ENCODE measurements at regions of chr2 and their contacts with region 1.

Region 1: GRCh38 chr2:113233593-113234550 is 44.8 kb downstream of the PAX8 start:
- DNase-seq: no peak
- ATAC-seq: no peak
- H3K4me3 Mint-ChIP-seq: peak overlapping the region in 5 of 10 donors; percentile 4 to 26 (median 18)
- H3K27ac Mint-ChIP-seq: peak overlapping the region in 3 of 10 donors; percentile 36 to 95 (median 47)
- H3K4me1 Mint-ChIP-seq: peaks cover 8 to 26% (median 16%) of the 10 kb centered on the region in 4 donors
- H3K27me3 Mint-ChIP-seq: no peaks in the 10 kb centered on the region

Region 2: GRCh38 chr2:113124181-113124961 is 109.5 kb before region 1 on chr2:
- POLR2A ChIA-PET with region 1: no interaction called
- DNase-seq: no peak
- ATAC-seq: no peak
- H3K4me3 Mint-ChIP-seq: peak overlapping the region in 1 of 10 donors; percentile 15
- H3K27ac Mint-ChIP-seq: no peak overlapping the region
- H3K4me1 Mint-ChIP-seq: peaks cover 2 to 23% (median 13%) of the 10 kb centered on the region in 4 donors
- H3K27me3 Mint-ChIP-seq: peaks cover 3 to 26% (median 8%) of the 10 kb centered on the region in 5 donors

Region 3: DNA sequence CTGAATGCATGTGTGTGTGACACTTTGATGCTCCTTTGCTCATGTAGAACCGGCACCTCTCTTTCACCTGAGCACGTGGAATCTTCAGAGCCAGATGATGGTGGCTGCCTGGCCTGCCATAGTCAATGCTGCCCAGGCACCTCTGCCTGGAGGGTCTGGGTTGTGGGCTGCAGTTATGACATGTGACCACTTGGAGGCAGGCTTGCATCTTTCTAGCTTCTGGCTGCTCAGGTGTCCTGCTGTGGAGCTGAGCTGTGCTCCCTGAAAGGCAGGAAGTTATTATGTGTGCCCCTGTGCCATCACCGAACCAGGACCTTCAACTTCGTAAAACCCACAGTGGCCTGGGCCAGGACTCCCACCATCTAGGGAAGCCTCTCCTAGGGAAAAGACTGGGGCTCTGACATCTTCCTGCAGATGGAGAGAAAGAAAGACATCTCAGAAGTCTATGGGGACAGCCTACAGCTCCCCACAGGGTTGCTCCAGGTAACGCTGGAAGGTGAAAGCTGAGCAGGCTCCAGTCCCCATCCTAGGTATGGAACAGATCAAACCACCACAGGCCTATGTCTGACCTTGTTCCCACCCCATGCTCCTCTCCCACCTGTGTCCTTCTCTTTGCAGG is 29.9 kb before region 1 on chr2:
- POLR2A ChIA-PET with region 1: interaction called, 14 read pairs
- DNase-seq: peak; percentile 51 to 85 (median 78)
- ATAC-seq: peak; percentile 85 to 91
- H3K4me3 Mint-ChIP-seq: peak overlapping the region in 6 of 10 donors; percentile 32 to 59 (median 49)
- H3K27ac Mint-ChIP-seq: peak overlapping the region; percentile 81 to 94 (median 92)
- H3K4me1 Mint-ChIP-seq: peaks cover 21 to 46% (median 36%) of the 10 kb centered on the region in 4 donors
- H3K27me3 Mint-ChIP-seq: no peaks in the 10 kb centered on the region

Region 4: DNA sequence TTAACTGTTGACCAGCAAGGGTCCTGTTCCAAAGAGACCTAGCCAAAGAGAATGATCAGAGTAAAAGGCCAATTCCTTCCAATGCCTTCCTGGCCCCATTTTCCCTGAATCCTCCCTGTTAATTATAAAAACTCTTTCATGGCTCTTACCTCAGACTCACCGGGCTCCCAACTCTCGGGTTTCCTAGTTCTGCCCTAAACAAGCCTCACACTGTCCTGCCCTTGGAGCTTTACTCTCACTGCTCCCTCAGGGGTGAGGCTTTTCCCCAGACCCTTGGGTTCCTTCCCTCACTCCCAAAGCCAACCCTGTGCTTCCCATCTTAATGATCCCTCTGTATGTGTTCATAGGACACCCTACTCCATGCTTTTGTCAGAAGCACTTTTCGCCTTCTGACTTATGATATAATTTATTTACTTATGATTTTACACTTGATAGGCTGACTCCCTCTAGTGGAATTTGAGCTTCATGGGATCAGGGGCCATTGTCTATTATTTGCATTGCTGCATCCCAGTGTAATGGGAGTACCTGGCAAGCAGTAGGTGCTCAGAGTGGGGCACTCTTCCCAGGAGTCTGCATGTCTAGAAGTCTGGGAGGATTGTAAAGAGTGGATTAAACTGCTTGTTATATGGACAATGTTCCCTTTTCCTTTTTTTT is 173.7 kb after region 1 on chr2:
- POLR2A ChIA-PET with region 1: no interaction called
- DNase-seq: no peak
- ATAC-seq: no peak
- H3K4me3 Mint-ChIP-seq: no peak overlapping the region
- H3K27ac Mint-ChIP-seq: no peak overlapping the region
- H3K4me1 Mint-ChIP-seq: peaks cover 0 to 31% (median 0%) of the 10 kb centered on the region in 4 donors
- H3K27me3 Mint-ChIP-seq: peaks cover 3 to 44% (median 23%) of the 10 kb centered on the region in 5 donors